Activated T-helper 1 cell treated with anti-CD3 and anti-CD28 coated beads, Interleukin-12 subunit alpha, Interleukin-12 subunit beta, Interleukin-2, Interleukin-4 antibody, amounts not matched to agents 30 ng/mL and 10 ng/mL and 1 ng/mL, durations not matched to agents 14 hours and 24 hours and 36 hours (primary cell): ENCODE measurements at regions of chr1 and their contacts with region 1.

Region 1: GRCh38 chr1:202998836-202999750 is 8.1 kb upstream of the TMEM183A start:
- DNase-seq: peak; percentile 43
- H3K4me3 Mint-ChIP-seq: peak overlapping the region; percentile 19
- H3K27ac Mint-ChIP-seq: no peak overlapping the region
- H3K4me1 Mint-ChIP-seq: peaks cover 12% of the 10 kb centered on the region
- H3K27me3 Mint-ChIP-seq: peaks cover 25% of the 10 kb centered on the region

Region 2: DNA sequence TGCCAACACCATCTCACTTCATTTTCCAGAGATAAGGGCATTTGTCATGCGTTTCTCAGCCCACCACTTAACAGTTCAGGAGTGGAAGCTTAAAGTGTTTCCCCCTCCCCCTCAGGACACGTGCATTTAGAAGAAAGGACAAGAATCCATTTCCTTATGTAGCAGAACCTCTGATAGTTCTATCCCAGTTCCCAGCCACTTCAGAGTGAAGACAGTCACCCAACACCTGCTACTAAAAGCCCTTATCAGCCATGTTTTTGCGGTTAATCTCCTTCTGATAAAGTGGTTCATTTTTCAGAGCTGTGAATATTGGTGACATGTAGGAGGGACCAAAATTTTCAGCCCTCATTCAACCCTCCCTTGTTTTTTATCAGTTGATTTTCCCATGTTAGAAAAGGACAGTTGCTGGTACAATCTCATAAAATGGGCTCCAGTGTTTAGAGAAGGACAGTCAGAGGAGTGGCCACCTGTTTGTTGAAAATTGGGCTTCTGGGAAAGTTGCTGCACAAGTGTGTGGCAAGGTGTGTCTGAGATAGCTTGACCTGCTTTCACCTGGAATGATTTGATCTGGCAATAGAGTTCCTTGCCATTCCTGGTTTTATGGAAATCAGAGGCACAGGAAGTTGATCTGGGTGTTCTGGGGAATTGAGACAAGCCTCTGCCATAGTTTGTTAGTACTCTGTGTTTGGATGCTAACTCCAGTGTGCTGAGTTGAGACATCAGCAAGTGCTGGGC is 536.6 kb before region 1 on chr1:
- intact Hi-C with region 1: loop called (anchors 10 kb)
- DNase-seq: no peak
- H3K4me3 Mint-ChIP-seq: no peak overlapping the region
- H3K27ac Mint-ChIP-seq: no peak overlapping the region
- H3K4me1 Mint-ChIP-seq: peaks cover 7% of the 10 kb centered on the region
- H3K27me3 Mint-ChIP-seq: peaks cover 3% of the 10 kb centered on the region

Region 3: GRCh38 chr1:202888531-202889360 is 110.3 kb before region 1 on chr1 and contains the start of gene RABIF:
- intact Hi-C with region 1: loop called (anchors 1 kb)
- DNase-seq: peak; percentile 95
- H3K4me3 Mint-ChIP-seq: peak within 1 kb of the TSS; percentile 96
- H3K27ac Mint-ChIP-seq: peak within 1 kb of the TSS; percentile 98
- H3K4me1 Mint-ChIP-seq: peaks cover 25% of the 10 kb centered on the region
- H3K27me3 Mint-ChIP-seq: no peaks in the 10 kb centered on the region
- total RNA-seq, gene RABIF: 11.8 and 13.4 TPM in 2 replicates

Region 4: GRCh38 chr1:202957733-202958543 is 41.2 kb before region 1 on chr1 and contains the start of gene ADIPOR1:
- intact Hi-C with region 1: loop called (anchors 2 kb)
- DNase-seq: peak; percentile 92
- H3K4me3 Mint-ChIP-seq: peak within 1 kb of the TSS; percentile 89
- H3K27ac Mint-ChIP-seq: peak within 1 kb of the TSS; percentile 80
- H3K4me1 Mint-ChIP-seq: peaks cover 46% of the 10 kb centered on the region
- H3K27me3 Mint-ChIP-seq: peaks cover 2% of the 10 kb centered on the region
- total RNA-seq, gene ADIPOR1: 88.7 and 93.3 TPM in 2 replicates